GM12878 (cell line): ENCODE measurements at regions of chr1 and their contacts with region 1.

Region 1: GRCh38 chr1:111570781-111571181 is 48.8 kb upstream of the RAP1A start:
- DNase-seq: no peak
- ATAC-seq: peak; percentile 96
- H3K4me3 ChIP-seq: no peak overlapping the region
- H3K27ac ChIP-seq: no peak overlapping the region
- H3K4me1 ChIP-seq: no peaks in the 10 kb centered on the region
- H3K27me3 ChIP-seq: no peaks in the 10 kb centered on the region
- CTCF ChIP-seq: peak; percentile 26 to 66 (median 51); a peak in 5 of 6 replicates
- EP300 ChIP-seq: no peak
- POLR2A ChIP-seq: no peak
- RAD21 ChIP-seq: peak; percentile 64

Region 2: GRCh38 chr1:111366256-111366655 is 204.5 kb before region 1 on chr1:
- CTCF ChIA-PET with region 1: no interaction called
- POLR2A ChIA-PET with region 1: no interaction called
- RAD21 ChIA-PET with region 1: no interaction called
- SMC1A ChIA-PET with region 1: no interaction called
- in situ Hi-C with region 1: no loop called
- intact Hi-C with region 1: no loop called
- DNase-seq: no peak
- ATAC-seq: no peak
- H3K4me3 ChIP-seq: no peak overlapping the region
- H3K27ac ChIP-seq: no peak overlapping the region
- H3K4me1 ChIP-seq: no peaks in the 10 kb centered on the region
- H3K27me3 ChIP-seq: peaks cover 2 to 4% of the 10 kb centered on the region in 2 experiments; a peak in 3 of 4 replicates
- CTCF ChIP-seq: no peak
- EP300 ChIP-seq: no peak
- POLR2A ChIP-seq: no peak
- RAD21 ChIP-seq: no peak

Region 3: DNA sequence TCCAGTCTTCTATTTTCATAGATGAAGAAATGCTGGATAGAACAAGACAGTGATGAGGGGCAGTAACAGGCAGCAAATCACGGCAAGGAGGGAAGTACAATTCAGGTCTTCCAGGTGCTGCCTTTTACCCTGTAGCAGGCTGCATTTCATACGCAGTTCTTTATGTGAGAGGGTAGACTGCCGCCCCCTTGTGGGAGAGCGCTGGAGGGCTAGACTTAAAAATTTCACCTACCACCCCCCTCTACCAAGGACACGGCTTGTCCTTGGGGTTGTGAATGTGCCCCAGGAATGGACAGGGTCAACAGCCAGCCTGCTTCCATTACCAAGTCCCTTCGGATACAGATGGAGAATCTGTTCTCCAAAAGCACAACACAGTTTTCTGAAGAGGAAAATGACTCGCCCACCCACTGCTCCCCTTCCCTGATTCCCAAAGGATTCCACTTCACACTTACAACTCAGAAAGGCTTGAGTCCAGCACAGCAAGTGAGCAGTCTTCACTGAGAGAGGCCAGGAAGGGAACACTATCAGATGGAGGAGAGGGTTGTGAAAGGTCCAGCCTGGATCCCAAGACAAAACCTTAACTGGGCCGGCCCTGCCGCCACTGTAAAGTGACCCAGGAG is 129.1 kb before region 1 on chr1:
- CTCF ChIA-PET with region 1: no interaction called
- POLR2A ChIA-PET with region 1: no interaction called
- RAD21 ChIA-PET with region 1: no interaction called
- SMC1A ChIA-PET with region 1: no interaction called
- in situ Hi-C with region 1: no loop called
- intact Hi-C with region 1: no loop called
- DNase-seq: no peak
- ATAC-seq: peak; percentile 81
- H3K4me3 ChIP-seq: no peak overlapping the region
- H3K27ac ChIP-seq: no peak overlapping the region
- H3K4me1 ChIP-seq: peaks cover 10% of the 10 kb centered on the region
- H3K27me3 ChIP-seq: no peaks in the 10 kb centered on the region
- CTCF ChIP-seq: peak; percentile 55 to 65 (median 56)
- EP300 ChIP-seq: no peak
- POLR2A ChIP-seq: no peak
- RAD21 ChIP-seq: peak; percentile 52

Region 4: GRCh38 chr1:111582644-111583618 is 12.2 kb after region 1 on chr1:
- CTCF ChIA-PET with region 1: interaction called, 8 read pairs
- POLR2A ChIA-PET with region 1: interaction called, 5 read pairs
- RAD21 ChIA-PET with region 1: interaction called, 4 read pairs
- SMC1A ChIA-PET with region 1: interaction called, 48 read pairs
- in situ Hi-C with region 1: no loop called
- intact Hi-C with region 1: no loop called
- DNase-seq: no peak
- ATAC-seq: peak; percentile 39
- H3K4me3 ChIP-seq: no peak overlapping the region
- H3K27ac ChIP-seq: no peak overlapping the region
- H3K4me1 ChIP-seq: peaks cover 18% of the 10 kb centered on the region
- H3K27me3 ChIP-seq: no peaks in the 10 kb centered on the region
- CTCF ChIP-seq: no peak
- EP300 ChIP-seq: no peak
- POLR2A ChIP-seq: no peak
- RAD21 ChIP-seq: no peak

Region 5: GRCh38 chr1:111619635-111620440 is 49.1 kb after region 1 on chr1 and contains the start of gene RAP1A:
- CTCF ChIA-PET with region 1: no interaction called
- POLR2A ChIA-PET with region 1: interaction called, 3 read pairs
- RAD21 ChIA-PET with region 1: interaction called, 3 read pairs
- SMC1A ChIA-PET with region 1: interaction called, 10 read pairs
- in situ Hi-C with region 1: no loop called
- intact Hi-C with region 1: no loop called
- DNase-seq: peak; percentile 55
- ATAC-seq: peak; percentile 64
- H3K4me3 ChIP-seq: peak within 1 kb of the TSS; percentile 87
- H3K27ac ChIP-seq: peak within 1 kb of the TSS; percentile 94
- H3K4me1 ChIP-seq: peaks cover 34% of the 10 kb centered on the region
- H3K27me3 ChIP-seq: no peaks in the 10 kb centered on the region
- CTCF ChIP-seq: no peak
- EP300 ChIP-seq: no peak
- POLR2A ChIP-seq: peak; percentile 84
- RAD21 ChIP-seq: no peak
- polyA plus RNA-seq, gene RAP1A: 71.8 to 93.7 TPM

Region 6: GRCh38 chr1:111633736-111634247 is 63.0 kb after region 1 on chr1:
- CTCF ChIA-PET with region 1: no interaction called
- POLR2A ChIA-PET with region 1: no interaction called
- RAD21 ChIA-PET with region 1: no interaction called
- SMC1A ChIA-PET with region 1: no interaction called
- in situ Hi-C with region 1: no loop called
- intact Hi-C with region 1: no loop called
- DNase-seq: no peak
- ATAC-seq: peak; percentile 23
- H3K4me3 ChIP-seq: no peak overlapping the region
- H3K27ac ChIP-seq: peak overlapping the region; percentile 45
- H3K4me1 ChIP-seq: peaks cover 37% of the 10 kb centered on the region
- H3K27me3 ChIP-seq: no peaks in the 10 kb centered on the region
- CTCF ChIP-seq: no peak
- EP300 ChIP-seq: no peak
- POLR2A ChIP-seq: no peak
- RAD21 ChIP-seq: no peak

Region 7: GRCh38 chr1:111656086-111657017 is 85.6 kb after region 1 on chr1:
- CTCF ChIA-PET with region 1: no interaction called
- POLR2A ChIA-PET with region 1: no interaction called
- RAD21 ChIA-PET with region 1: no interaction called
- SMC1A ChIA-PET with region 1: interaction called, 3 read pairs
- in situ Hi-C with region 1: no loop called
- intact Hi-C with region 1: loop called (anchors 5 kb)
- DNase-seq: no peak
- ATAC-seq: no peak
- H3K4me3 ChIP-seq: no peak overlapping the region
- H3K27ac ChIP-seq: no peak overlapping the region
- H3K4me1 ChIP-seq: peaks cover 21% of the 10 kb centered on the region
- H3K27me3 ChIP-seq: no peaks in the 10 kb centered on the region
- CTCF ChIP-seq: peak; percentile 28 to 54 (median 52); a peak in 5 of 6 replicates
- EP300 ChIP-seq: no peak
- POLR2A ChIP-seq: no peak
- RAD21 ChIP-seq: peak; percentile 83